Naive thymus-derived CD8-positive, alpha-beta T cell (primary cell): ENCODE measurements at regions of chr3 and their contacts with region 1.

Region 1: GRCh38 chr3:45665101-45665572 is 24.1 kb upstream of the SACM1L start:
- DNase-seq: peak; percentile 27 to 85 (median 66)
- ATAC-seq: peak; percentile 49 to 53
- H3K4me3 Mint-ChIP-seq: peak overlapping the region; percentile 82 to 96 (median 90)
- H3K27ac Mint-ChIP-seq: peak overlapping the region; percentile 85 to 98 (median 96)
- H3K4me1 Mint-ChIP-seq: peaks cover 17 to 38% (median 29%) of the 10 kb centered on the region in 4 donors
- H3K27me3 Mint-ChIP-seq: no peaks in the 10 kb centered on the region

Region 2: DNA sequence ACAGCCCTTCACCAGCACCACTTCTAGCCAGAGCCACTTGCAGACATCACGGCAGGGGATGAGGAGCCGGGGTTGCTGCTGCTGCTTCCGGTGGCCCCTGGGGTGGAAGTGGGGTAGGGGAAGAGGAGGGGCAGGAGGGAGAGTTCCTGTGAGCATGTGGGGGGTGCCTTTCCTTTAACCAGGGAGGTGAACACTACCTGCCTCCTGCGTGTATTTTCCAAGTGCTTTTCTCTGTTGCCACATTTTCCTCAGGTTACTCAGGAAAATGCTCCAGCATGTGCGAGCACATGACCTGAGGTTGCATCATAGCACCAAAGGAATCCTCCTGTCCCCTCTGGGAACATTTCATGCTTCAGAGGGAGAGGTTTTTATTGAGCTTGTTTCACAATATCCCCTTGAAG is 11.9 kb after region 1 on chr3:
- POLR2A ChIA-PET with region 1: interaction called, 22 read pairs
- DNase-seq: peak; percentile 48 to 86 (median 68)
- ATAC-seq: peak; percentile 99 to 100
- H3K4me3 Mint-ChIP-seq: peak overlapping the region; percentile 69 to 91 (median 79)
- H3K27ac Mint-ChIP-seq: peak overlapping the region; percentile 94 to 99 (median 97)
- H3K4me1 Mint-ChIP-seq: peaks cover 15 to 48% (median 31%) of the 10 kb centered on the region in 4 donors
- H3K27me3 Mint-ChIP-seq: no peaks in the 10 kb centered on the region